WTC11 (cell line): ENCODE measurements at regions of chr16 and their contacts with region 1.

Region 1: DNA sequence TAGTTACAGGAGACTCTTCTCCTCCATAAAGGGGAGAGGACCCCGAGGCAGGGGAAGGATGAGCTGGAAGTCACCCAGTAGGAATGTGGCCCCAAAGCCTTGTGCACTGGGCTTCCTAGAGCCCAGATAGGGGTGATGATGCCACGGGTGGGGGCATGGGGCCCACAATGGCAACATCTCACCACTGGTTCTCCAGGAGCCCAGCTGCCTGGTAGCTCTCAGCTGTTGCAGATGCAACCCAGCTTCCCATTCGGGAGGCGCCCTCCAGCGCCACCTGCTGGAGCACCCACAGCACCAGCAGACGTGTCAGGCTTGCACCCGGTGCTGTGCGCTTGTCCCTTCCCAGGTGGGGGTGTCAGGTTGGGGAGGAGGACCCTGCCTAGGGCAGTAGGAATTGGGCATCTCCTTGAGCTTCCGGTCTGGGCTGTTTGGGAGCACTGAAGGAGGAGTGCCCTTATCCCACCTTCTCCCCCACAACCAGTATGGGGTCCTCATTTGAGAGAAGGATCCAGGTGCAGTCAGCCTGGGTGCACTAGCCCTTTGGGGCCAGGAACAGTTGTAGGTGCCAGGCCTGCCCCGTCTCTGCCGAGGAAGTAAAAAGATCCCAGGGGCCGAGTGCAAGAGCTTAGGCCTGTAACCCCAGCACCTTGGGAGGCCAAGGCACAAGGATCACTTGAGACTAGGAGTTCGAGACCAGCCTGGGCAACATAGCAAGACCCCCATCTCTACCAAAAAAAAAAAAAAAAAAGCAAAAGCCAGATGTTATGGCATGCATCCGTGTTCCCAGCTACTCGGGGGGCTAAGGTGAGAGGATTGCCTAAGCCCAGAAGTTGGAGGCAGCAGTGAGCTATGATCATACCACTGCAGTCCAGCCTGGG is 14.4 kb downstream of the CDIPT start:
- DNase-seq: peak; percentile 86
- ATAC-seq: peak; percentile 79
- H3K4me3 Mint-ChIP-seq: no peak overlapping the region
- H3K27ac Mint-ChIP-seq: no peak overlapping the region
- H3K4me1 Mint-ChIP-seq: peaks cover 10% of the 10 kb centered on the region
- H3K27me3 Mint-ChIP-seq: no peaks in the 10 kb centered on the region; the same call in 1 of the 2 replicates
- CTCF ChIP-seq: peak; percentile 78

Region 2: DNA sequence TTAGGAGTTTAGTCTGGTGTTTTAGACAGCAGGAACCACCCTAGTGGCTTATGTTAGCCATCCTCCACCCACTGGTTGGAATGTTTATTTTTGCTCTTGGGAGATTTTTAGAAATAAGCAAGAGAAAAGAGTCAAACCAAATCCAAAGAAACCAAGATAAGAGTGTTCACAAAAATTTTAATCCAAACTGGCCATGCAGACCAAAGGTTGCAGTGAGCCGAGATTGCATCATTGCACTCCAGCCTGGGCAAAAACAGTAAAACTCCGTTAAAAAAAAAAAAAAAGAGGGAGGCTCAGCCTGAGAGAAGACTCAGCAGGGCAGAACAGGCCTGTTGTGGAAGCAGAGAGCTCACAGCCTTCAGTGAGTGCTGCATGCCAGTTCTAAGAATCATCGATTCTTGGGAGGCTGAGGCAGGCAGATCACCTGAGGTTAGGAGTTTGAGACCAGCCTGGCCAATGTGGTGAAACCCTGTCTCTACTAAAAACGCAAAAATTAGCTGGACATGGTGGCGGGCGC is 90.7 kb before region 1 on chr16:
- CTCF ChIA-PET with region 1: interaction called, 11 read pairs
- POLR2A ChIA-PET with region 1: no interaction called
- DNase-seq: no peak
- ATAC-seq: peak; percentile 41; the same call in 1 of the 2 replicates
- H3K4me3 Mint-ChIP-seq: no peak overlapping the region
- H3K27ac Mint-ChIP-seq: no peak overlapping the region; the same call in 1 of the 2 replicates
- H3K4me1 Mint-ChIP-seq: peaks cover 7% of the 10 kb centered on the region; the same call in 1 of the 2 replicates
- H3K27me3 Mint-ChIP-seq: peaks cover 13% of the 10 kb centered on the region
- CTCF ChIP-seq: no peak

Region 3: DNA sequence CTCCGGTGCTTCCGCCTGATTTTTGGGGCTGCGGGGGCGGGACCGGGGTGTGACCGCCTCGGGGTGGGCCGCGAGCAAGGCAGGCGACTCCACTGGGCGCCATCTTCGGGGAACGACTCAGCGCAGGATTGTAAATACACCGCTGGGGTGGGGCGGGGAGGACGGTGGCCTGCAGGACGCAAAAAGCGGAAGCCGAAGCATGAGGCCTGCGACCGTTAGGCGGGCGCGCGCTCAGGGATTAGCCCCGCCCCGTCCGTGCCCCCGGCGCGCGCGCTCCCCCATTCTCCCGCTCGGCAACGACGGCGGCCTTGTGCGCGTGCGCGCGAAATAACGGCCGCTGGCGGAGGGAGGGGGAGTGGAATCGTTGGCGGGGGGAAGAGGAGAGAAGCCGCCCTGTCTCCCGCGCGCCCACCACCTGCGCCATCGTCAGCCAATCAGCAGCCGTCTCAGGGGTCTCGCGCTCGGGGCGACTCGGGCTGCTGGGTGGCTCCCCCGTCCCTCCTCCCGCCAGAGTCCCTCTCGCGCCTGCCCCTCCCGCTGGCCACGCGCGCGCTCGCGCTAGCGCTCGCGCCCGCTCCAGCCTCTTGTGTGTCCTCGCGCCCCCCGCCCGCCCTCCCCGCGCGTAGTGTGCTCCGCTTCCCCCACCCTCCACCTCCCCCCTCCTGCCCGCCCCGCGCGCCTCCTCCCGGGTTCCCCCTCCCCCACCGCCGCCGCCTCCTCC is 43.1 kb before region 1 on chr16:
- CTCF ChIA-PET with region 1: interaction called, 32 read pairs
- POLR2A ChIA-PET with region 1: interaction called, 4 read pairs
- DNase-seq: peak; percentile 97
- ATAC-seq: peak; percentile 78
- H3K4me3 Mint-ChIP-seq: peak overlapping the region; percentile 99
- H3K27ac Mint-ChIP-seq: peak overlapping the region; percentile 100
- H3K4me1 Mint-ChIP-seq: peaks cover 44% of the 10 kb centered on the region
- H3K27me3 Mint-ChIP-seq: no peaks in the 10 kb centered on the region
- CTCF ChIP-seq: no peak

Region 4: DNA sequence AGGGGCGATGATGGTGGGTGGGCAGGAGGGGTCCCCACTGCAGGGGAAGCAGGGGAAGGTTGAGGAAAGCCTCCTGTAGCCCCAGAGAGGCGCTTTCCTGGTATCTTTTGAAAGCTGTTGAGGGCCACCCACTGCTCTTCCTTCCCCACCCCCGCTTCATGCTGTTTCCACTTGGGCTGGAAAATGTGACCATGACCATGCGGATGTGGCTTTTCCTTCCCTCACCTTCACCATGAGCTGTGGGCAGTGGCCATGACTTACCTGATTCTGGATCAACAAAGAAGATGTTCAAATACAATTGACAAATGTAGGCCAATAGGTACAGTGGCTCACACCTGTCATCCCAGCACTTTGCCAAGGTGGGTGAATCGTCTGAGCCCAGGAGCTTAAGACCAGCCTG is 14.6 kb before region 1 on chr16:
- CTCF ChIA-PET with region 1: interaction called, 68 read pairs
- POLR2A ChIA-PET with region 1: no interaction called
- DNase-seq: no peak
- ATAC-seq: no peak
- H3K4me3 Mint-ChIP-seq: no peak overlapping the region
- H3K27ac Mint-ChIP-seq: no peak overlapping the region
- H3K4me1 Mint-ChIP-seq: no peaks in the 10 kb centered on the region
- H3K27me3 Mint-ChIP-seq: no peaks in the 10 kb centered on the region
- CTCF ChIP-seq: no peak

Region 5: GRCh38 chr16:29900102-29900887 is 51.6 kb after region 1 on chr16 and contains the start of gene ASPHD1:
- CTCF ChIA-PET with region 1: interaction called, 25 read pairs
- POLR2A ChIA-PET with region 1: interaction called, 4 read pairs
- DNase-seq: peak; percentile 86
- ATAC-seq: peak; percentile 54
- H3K4me3 Mint-ChIP-seq: peak within 1 kb of the TSS; percentile 98
- H3K27ac Mint-ChIP-seq: peak within 1 kb of the TSS; percentile 91
- H3K4me1 Mint-ChIP-seq: peaks cover 33% of the 10 kb centered on the region
- H3K27me3 Mint-ChIP-seq: no peaks in the 10 kb centered on the region
- CTCF ChIP-seq: no peak
- total RNA-seq, gene ASPHD1: 17.6 to 26.9 TPM (median 20.2 TPM) in 3 replicates

Region 6: DNA sequence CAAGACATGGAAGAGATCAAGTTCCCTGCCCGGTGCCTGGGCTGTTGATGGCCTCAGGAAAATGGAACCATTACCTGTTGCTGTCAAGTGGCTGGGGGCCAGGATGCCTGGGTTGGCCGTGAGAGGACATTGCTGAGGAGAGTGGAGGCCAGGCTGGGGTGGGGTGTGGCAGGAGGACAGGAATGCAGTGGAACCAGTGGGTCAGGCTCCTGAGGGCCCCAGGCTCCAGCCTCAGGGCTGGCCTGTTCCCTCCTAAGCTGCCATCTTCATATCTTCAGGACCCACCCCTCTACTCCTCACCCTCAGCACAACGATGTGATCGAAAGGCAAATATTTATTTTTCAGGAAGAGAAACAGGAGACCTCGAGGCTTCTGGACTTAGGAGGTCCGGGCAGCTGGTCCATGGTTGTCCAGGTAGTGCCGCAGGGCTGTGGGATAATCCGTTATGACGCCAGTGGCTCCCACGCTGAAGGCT is 255.9 kb after region 1 on chr16:
- CTCF ChIA-PET with region 1: no interaction called
- POLR2A ChIA-PET with region 1: no interaction called
- DNase-seq: no peak
- ATAC-seq: no peak
- H3K4me3 Mint-ChIP-seq: no peak overlapping the region
- H3K27ac Mint-ChIP-seq: no peak overlapping the region
- H3K4me1 Mint-ChIP-seq: no peaks in the 10 kb centered on the region
- H3K27me3 Mint-ChIP-seq: no peaks in the 10 kb centered on the region
- CTCF ChIP-seq: no peak